ENCODE measurements at regions of chr6 and their contacts with region 1.

Region 1: GRCh38 chr6:118776607-118777549 is 117.1 kb upstream of the ASF1A start:
- DNase-seq: peak; percentile 70
- CTCF ChIP-seq: peak; percentile 58

Region 2: GRCh38 chr6:118551063-118552053 is 225.5 kb before region 1 on chr6:
- in situ Hi-C with region 1: loop called (anchors 25 kb)
- DNase-seq: peak; percentile 48
- CTCF ChIP-seq: peak; percentile 4

Region 3: GRCh38 chr6:118843685-118844390 is 67.0 kb after region 1 on chr6:
- in situ Hi-C with region 1: no loop called
- DNase-seq: peak; percentile 57
- CTCF ChIP-seq: no peak

Region 4: GRCh38 chr6:119110601-119111548 is 334.0 kb after region 1 on chr6:
- in situ Hi-C with region 1: loop called (anchors 25 kb)
- DNase-seq: peak; percentile 40
- CTCF ChIP-seq: peak; percentile 42